Activated CD4-positive, alpha-beta T cell treated with anti-CD3 and anti-CD28 coated beads, Interleukin-2, amount 10 ng/mL, durations not matched to agents 24 days and 14 days (primary cell): ENCODE measurements at regions of chr14 and their contacts with region 1.

Region 1: GRCh38 chr14:39279515-39279914 is 45.8 kb downstream of the MIA2 start:
- DNase-seq: no peak
- H3K4me3 Mint-ChIP-seq: no peak overlapping the region
- H3K27ac Mint-ChIP-seq: peak overlapping the region; percentile 25
- H3K4me1 Mint-ChIP-seq: peaks cover 21% of the 10 kb centered on the region
- H3K27me3 Mint-ChIP-seq: no peaks in the 10 kb centered on the region

Region 2: DNA sequence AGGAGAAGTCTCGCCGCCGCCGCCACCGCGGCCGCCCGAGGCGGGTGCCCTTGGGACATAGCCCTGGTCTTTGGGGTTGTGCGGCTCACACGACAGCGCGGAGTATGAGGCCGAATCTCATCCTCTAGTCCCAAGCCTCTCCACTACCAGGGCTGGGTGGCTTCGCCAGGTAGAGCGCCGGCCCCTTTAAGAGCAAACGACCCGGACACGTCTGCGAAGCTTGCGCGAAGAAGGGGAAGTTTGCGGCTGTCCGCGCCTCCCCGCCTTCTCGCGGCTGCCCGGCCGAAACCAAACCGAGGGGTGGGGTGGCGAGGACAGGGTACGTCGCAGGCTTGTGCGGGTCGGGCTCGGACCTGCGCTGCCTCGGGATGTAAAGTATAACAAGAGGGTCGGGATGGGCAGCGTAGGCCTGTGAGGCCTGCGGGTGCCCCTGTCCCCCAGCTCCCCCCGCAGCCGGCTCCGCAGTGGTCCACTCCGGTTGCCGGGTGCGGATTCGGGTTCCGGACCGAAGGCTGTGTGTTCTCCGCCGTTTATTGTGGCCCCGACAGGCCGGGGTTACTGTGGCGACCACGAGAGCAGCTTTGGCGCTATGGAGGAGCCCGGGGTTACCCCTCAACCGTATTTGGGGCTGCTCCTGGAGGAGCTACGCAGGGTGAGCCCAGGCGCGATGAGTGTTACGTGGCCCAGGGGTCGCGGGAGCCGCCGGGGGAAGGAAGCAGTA is 12.5 kb before region 1 on chr14:
- intact Hi-C with region 1: loop called (anchors 1 kb)
- DNase-seq: peak; percentile 94
- H3K4me3 Mint-ChIP-seq: peak overlapping the region; percentile 82
- H3K27ac Mint-ChIP-seq: peak overlapping the region; percentile 81
- H3K4me1 Mint-ChIP-seq: peaks cover 39% of the 10 kb centered on the region
- H3K27me3 Mint-ChIP-seq: no peaks in the 10 kb centered on the region